ENCODE measurements at regions of chr1 and their contacts with region 1.

Region 1: DNA sequence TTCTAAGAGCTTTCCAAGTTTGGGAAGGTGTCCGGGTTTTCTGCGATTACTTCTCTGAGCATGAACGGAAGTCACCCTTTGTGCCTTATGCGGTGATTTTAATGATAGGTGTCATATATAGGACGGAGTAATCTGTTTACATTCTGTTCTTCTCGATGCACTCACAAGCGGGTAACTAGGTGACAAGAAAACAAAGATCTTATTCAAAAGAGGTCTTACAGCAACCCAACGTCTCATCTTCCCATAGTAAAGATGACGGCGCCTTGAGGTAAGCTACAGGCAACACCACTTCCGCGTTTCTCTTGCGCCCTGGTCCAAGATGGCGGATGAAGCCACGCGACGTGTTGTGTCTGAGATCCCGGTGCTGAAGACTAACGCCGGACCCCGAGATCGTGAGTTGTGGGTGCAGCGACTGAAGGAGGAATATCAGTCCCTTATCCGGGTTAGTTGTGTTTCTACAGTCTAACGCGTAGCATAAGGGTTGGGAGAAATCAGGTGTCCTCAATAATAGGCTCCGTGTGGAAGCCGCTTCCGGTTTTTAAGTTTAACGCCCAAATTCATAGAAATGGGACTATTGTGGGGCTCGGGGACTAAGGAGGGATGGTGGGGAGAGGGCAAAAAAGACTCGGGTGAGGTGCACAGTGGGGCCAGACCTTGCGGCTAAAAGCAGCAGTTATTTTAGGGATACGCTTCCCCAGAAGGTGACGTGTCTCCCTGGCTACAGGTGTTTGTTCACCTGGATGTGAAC is at the start of gene UFC1:
- DNase-seq: peak; percentile 90
- H3K4me3 ChIP-seq: peak within 1 kb of the TSS; percentile 74 to 80 (median 75)
- H3K27ac ChIP-seq: peak within 1 kb of the TSS; percentile 96
- H3K4me1 ChIP-seq: peaks cover 3% of the 10 kb centered on the region
- H3K27me3 ChIP-seq: no peaks in the 10 kb centered on the region
- CTCF ChIP-seq: peak in 1 of 2 donors; percentile 1
- total RNA-seq, gene UFC1: 49.2 to 59.3 TPM

Region 2: DNA sequence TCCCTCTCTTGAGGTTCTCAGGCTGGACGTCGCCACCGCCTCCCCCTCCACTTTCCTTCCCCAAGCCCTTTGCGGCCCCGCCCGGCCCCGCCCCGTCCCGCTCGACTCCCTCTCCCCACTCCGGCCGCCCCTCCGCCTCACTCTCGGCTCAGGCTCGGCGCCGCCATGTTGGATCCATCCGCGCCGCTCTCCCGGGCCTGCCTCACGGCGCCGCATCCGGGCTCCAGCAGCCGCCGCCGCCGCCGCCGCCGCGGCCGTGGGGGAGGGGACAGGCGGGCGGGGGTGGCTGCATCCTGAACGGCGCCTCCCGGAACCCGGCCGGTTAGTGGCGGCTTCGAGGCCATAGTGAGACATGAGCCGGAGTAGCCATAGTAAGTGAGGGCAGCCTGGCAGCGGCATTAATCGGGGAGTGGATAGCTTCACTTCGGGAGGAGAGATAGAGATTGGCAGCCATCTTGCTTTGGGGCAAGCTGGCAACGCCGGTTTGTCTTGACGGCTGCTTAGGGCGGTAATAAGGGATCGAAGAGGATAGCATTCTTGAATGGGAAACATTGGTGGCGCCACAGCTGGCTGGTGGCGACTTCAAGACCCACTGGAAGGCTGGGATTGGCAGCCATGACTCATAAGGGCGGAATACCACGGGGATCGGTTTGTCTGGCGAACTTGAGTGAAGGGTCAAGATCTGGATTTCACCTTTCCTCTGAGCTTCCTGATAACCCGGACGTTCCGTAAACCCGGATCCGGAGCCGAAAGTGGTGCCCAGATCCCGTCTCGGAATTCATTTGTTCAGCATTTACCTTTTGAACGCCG is 21.2 kb before region 1 on chr1 and contains the start of gene DEDD:
- CTCF ChIA-PET with region 1: interaction called, 3 read pairs
- dilution Hi-C with region 1: no loop called
- in situ Hi-C with region 1: no loop called
- intact Hi-C with region 1: loop called (anchors 1 kb)
- DNase-seq: peak; percentile 97
- H3K4me3 ChIP-seq: peak within 1 kb of the TSS; percentile 57 to 88 (median 65)
- H3K27ac ChIP-seq: peak within 1 kb of the TSS; percentile 91
- H3K4me1 ChIP-seq: peaks cover 10% of the 10 kb centered on the region
- H3K27me3 ChIP-seq: no peaks in the 10 kb centered on the region
- CTCF ChIP-seq: peak in 1 of 2 donors; percentile 17
- total RNA-seq, gene DEDD: 40.0 to 42.3 TPM

Region 3: DNA sequence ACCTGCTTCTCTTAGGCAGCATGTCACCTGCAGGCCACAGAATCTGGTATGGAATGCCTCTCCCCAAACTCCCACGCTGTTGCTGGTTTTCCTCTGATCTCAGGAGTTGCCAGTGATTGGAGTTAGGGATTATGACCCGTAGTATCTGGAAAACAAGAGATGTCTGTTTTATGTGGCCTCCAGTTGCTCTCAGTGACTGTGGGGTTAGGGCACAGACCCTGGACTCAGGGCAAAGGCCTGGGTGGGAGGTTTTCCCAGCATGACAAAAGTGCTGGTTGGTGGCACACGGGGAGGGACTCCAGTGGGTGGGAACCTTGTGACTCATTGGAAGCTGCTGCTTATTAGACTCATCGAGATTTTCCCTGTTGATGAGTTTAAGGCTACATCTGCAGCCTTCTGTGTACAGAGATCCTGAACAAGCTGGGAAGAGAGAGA is 84.2 kb after region 1 on chr1 and contains the start of gene NR1I3:
- CTCF ChIA-PET with region 1: no interaction called
- dilution Hi-C with region 1: no loop called
- in situ Hi-C with region 1: no loop called
- intact Hi-C with region 1: no loop called
- DNase-seq: peak; percentile 48
- H3K4me3 ChIP-seq: no peak within 1 kb of the TSS
- H3K27ac ChIP-seq: no peak within 1 kb of the TSS
- H3K4me1 ChIP-seq: no peaks in the 10 kb centered on the region
- H3K27me3 ChIP-seq: no peaks in the 10 kb centered on the region
- CTCF ChIP-seq: no peak
- total RNA-seq, gene NR1I3: not detected